ENCODE measurements at regions of chr1 and their contacts with region 1.

Region 1: GRCh38 chr1:84959294-84959693 is 37.6 kb downstream of the MCOLN2 start:
- DNase-seq: peak; percentile 62
- H3K4me3 Mint-ChIP-seq: no peak overlapping the region
- H3K27ac Mint-ChIP-seq: no peak overlapping the region
- H3K4me1 Mint-ChIP-seq: peaks cover 7% of the 10 kb centered on the region
- H3K27me3 Mint-ChIP-seq: no peaks in the 10 kb centered on the region

Region 2: DNA sequence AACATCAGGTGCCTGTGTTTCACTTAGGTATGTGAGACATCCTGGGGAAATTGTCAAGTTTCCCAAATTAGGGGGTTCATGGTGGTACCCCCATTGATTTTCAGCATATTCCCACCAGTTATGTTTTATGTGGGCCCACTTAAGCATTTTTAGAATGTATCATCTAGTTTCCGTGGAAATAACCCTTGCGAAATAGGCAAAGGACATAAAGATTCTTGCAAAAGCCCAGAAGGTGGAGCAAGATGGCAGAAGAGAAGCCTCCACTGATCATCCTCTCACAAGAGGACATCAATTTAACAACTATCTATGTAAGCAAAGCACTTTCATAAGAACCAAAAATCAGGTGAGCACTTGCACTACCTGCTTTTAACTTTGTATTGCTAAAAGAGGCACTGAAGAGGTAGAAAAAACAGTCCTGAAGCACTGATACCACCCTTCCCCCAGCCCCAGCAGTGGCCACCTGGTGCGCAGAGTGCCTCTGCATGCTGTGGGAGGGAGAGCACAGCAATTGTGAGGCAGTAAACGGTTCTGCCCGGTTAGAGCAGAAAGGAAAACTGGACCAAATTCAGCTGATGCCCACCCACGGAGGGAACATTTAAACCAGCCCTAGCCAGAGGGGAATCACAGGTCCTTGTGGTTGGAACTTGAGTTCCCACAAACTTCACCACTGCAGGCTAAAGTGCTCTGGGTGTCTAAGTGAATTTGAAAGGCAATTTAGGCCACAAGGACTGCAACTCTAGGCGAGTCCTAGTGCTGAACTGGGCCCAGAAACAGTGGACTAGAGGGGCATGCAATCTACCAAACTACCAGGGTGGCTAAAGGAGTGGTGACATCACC is 14.4 kb after region 1 on chr1:
- CTCF ChIA-PET with region 1: interaction called, 4 read pairs
- intact Hi-C with region 1: loop called (anchors 1 kb)
- DNase-seq: no peak
- H3K4me3 Mint-ChIP-seq: no peak overlapping the region
- H3K27ac Mint-ChIP-seq: no peak overlapping the region
- H3K4me1 Mint-ChIP-seq: peaks cover 17% of the 10 kb centered on the region
- H3K27me3 Mint-ChIP-seq: peaks cover 2% of the 10 kb centered on the region

Region 3: DNA sequence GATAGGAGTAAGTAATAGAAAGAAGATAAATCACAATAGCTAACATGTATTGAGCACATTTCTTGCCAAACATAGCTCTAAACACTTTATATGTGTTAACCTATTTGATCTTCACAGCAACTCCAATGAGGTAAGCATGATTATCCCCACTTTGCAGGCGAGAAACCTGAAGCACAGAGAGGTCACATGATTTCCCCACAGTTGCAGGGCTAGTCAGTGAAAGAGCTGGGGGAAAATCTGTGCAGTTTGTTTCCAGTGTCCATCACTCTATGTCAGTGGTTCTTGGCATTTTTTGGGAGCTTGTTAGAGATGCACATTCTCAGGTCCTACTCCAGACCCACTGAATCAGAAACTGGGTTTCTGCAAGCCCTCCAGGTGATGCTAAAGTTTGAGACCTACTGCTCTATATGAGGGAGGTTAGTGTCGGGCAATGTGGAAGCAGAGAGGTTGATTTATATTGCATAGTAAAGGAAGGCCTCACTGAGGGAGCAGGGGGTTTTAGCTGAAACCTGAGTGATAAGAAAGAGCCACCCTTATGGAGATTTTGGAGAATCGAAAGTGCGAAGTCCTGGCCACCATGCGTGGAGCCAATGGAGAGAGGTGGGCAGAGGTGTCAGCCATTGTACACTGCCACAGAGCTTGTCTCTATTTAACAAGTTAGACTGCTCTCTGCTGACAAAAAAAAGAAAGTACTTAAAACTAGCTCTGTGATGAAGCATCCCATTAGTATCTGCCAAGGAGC is 68.1 kb after region 1 on chr1:
- CTCF ChIA-PET with region 1: interaction called, 4 read pairs
- intact Hi-C with region 1: loop called (anchors 1 kb)
- DNase-seq: peak; percentile 25
- H3K4me3 Mint-ChIP-seq: no peak overlapping the region
- H3K27ac Mint-ChIP-seq: peak overlapping the region; percentile 34
- H3K4me1 Mint-ChIP-seq: peaks cover 7% of the 10 kb centered on the region
- H3K27me3 Mint-ChIP-seq: no peaks in the 10 kb centered on the region

Measured in activated naive CD4-positive, alpha-beta T cell treated with anti-CD3 and anti-CD28 coated beads for 36 hours (primary cell).